Activated B cell treated with CpG ODN at 0.5 μM for 24 hours (primary cell): ENCODE measurements at regions of chr11 and their contacts with region 1.

Region 1: DNA sequence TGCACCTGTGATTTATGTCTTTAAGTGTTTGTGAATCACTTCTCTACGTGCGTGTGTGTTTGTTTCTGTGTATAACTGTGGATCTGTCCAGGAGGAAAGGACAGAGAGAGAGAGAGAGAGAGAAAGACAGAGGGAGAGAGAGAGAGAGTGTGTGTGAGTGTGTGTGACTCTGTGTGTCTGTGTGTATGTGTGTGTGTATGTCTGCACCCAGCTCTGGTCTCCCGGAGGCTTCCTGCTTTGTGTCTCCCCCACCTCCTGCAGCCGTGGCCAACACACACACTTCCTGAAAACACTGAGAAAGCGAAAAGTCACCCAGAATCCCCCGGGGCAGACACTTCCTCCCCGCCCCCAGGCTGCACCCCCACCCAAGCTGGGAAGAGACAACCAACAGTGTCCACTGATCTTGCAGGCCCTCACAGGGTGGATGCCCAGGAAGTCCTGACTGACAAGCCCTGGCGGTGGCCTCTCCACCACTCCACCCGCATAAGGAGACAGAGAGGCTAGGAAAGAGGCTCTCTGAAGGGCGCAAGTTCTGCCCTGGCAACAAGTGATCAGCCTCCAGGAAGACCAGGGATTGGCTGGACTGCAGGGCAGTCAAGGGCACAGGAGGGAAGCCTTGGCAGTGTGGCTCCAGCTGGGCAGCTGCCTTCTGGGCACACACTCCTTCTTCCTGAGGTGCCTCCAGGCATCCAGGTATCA is 30.0 kb downstream of the ARAP1 start:
- DNase-seq: peak; percentile 78
- ATAC-seq: peak; percentile 88
- H3K4me3 Mint-ChIP-seq: peak overlapping the region; percentile 97
- H3K27ac Mint-ChIP-seq: peak overlapping the region; percentile 94
- H3K4me1 Mint-ChIP-seq: peaks cover 85% of the 10 kb centered on the region
- H3K27me3 Mint-ChIP-seq: no peaks in the 10 kb centered on the region
- CTCF ChIP-seq: no peak

Region 2: GRCh38 chr11:72430741-72431570 is 291.2 kb before region 1 on chr11:
- CTCF ChIA-PET with region 1: no interaction called
- POLR2A ChIA-PET with region 1: no interaction called
- intact Hi-C with region 1: no loop called
- DNase-seq: no peak
- ATAC-seq: no peak
- H3K4me3 Mint-ChIP-seq: no peak overlapping the region
- H3K27ac Mint-ChIP-seq: no peak overlapping the region
- H3K4me1 Mint-ChIP-seq: peaks cover 36% of the 10 kb centered on the region
- H3K27me3 Mint-ChIP-seq: no peaks in the 10 kb centered on the region
- CTCF ChIP-seq: no peak

Region 3: GRCh38 chr11:72441752-72442207 is 280.4 kb before region 1 on chr11:
- CTCF ChIA-PET with region 1: no interaction called
- POLR2A ChIA-PET with region 1: no interaction called
- intact Hi-C with region 1: no loop called
- DNase-seq: no peak
- ATAC-seq: no peak
- H3K4me3 Mint-ChIP-seq: no peak overlapping the region
- H3K27ac Mint-ChIP-seq: no peak overlapping the region
- H3K4me1 Mint-ChIP-seq: peaks cover 7% of the 10 kb centered on the region
- H3K27me3 Mint-ChIP-seq: no peaks in the 10 kb centered on the region
- CTCF ChIP-seq: no peak

Region 4: DNA sequence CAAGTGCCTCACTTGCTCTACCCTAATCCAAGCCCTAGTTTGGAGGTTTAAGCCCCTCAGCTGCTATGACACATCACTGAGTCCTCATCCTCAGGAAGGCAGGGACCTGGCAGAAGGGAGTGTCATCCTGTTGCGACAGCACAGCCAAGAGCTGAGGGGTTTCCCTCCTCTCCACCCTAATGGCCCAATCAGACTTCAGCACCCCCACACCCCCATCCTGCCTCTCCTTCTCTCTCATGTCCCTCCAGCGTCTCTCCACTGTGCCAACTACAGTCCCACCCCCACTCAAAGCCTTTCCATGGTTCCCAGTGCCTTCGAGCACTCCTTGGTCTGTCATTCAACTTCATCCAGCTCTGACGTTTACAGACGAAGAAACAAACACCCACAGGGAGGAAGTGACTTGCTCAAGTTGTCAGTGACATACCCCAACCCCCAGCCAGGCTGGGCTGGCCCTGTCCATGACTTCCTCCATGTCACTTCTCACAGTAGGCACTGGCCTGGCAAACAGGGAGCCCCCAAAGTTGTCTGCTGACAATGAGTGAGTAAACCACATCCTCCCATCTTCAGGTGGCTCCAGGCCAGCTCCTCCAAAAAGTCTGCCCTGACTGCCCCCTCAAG is 14.4 kb after region 1 on chr11:
- CTCF ChIA-PET with region 1: interaction called, 42 read pairs
- POLR2A ChIA-PET with region 1: interaction called, 18 read pairs
- intact Hi-C with region 1: loop called (anchors 1 kb)
- DNase-seq: peak; percentile 47
- ATAC-seq: peak; percentile 41
- H3K4me3 Mint-ChIP-seq: peak overlapping the region; percentile 82
- H3K27ac Mint-ChIP-seq: peak overlapping the region; percentile 99
- H3K4me1 Mint-ChIP-seq: peaks cover 83% of the 10 kb centered on the region
- H3K27me3 Mint-ChIP-seq: no peaks in the 10 kb centered on the region
- CTCF ChIP-seq: no peak

Region 5: GRCh38 chr11:72787216-72788104 is 65.3 kb after region 1 on chr11:
- CTCF ChIA-PET with region 1: interaction called, 144 read pairs
- POLR2A ChIA-PET with region 1: interaction called, 57 read pairs
- intact Hi-C with region 1: no loop called
- DNase-seq: peak; percentile 33
- ATAC-seq: peak; percentile 79
- H3K4me3 Mint-ChIP-seq: peak overlapping the region; percentile 50
- H3K27ac Mint-ChIP-seq: peak overlapping the region; percentile 90
- H3K4me1 Mint-ChIP-seq: peaks cover 39% of the 10 kb centered on the region
- H3K27me3 Mint-ChIP-seq: no peaks in the 10 kb centered on the region
- CTCF ChIP-seq: no peak

Region 6: DNA sequence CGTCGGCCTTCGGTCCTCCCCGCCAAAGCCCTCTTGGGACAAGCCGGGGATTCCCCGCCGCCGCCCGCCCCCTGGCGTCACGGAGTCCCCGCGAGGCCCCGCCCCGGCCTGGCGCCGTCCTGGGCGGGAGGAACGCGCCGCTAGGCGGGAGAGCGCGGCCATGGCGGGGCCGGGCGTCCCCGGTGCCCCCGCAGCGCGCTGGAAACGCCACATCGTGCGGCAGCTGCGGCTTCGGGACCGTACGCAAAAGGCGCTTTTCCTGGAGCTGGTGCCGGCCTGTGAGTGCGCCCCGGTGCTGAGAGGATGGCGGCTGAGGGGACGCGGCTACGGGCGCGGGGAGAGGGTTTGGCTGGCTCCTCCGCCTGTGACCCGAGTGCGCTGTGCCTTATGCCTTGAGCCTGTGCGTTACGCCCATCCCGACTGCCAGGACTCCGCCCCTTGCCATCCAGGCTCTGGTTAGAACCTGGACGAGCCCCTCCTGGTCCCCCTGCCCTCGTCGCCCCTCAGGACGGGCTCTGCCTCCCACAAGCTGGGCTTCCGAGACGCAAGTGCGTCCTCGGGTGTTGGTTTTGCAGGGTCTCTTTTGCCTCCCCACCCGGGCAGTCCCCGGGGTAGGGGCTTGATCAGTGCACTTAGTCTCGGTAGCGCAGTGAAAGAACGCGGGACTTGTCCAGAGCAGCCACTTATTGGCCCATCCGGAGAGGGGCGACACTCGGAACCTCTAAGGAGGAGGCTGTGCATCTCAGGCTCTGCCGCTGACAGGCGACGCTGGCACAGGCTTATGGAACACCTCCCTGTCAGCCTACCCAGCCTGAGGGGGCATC is 92.3 kb after region 1 on chr11 and contains the start of gene ATG16L2:
- CTCF ChIA-PET with region 1: interaction called, 27 read pairs
- POLR2A ChIA-PET with region 1: interaction called, 26 read pairs
- intact Hi-C with region 1: loop called (anchors 1 kb)
- DNase-seq: peak; percentile 97
- ATAC-seq: peak; percentile 75
- H3K4me3 Mint-ChIP-seq: peak within 1 kb of the TSS; percentile 98
- H3K27ac Mint-ChIP-seq: peak within 1 kb of the TSS; percentile 94
- H3K4me1 Mint-ChIP-seq: peaks cover 54% of the 10 kb centered on the region
- H3K27me3 Mint-ChIP-seq: no peaks in the 10 kb centered on the region
- CTCF ChIP-seq: no peak
- total RNA-seq, gene ATG16L2: 73.5 and 96.7 TPM in 2 replicates

Region 7: GRCh38 chr11:72848846-72849466 is 126.8 kb after region 1 on chr11:
- CTCF ChIA-PET with region 1: interaction called, 7 read pairs
- POLR2A ChIA-PET with region 1: interaction called, 3 read pairs
- intact Hi-C with region 1: loop called (anchors 1 kb)
- DNase-seq: no peak
- ATAC-seq: peak; percentile 54
- H3K4me3 Mint-ChIP-seq: no peak overlapping the region
- H3K27ac Mint-ChIP-seq: no peak overlapping the region
- H3K4me1 Mint-ChIP-seq: peaks cover 16% of the 10 kb centered on the region
- H3K27me3 Mint-ChIP-seq: no peaks in the 10 kb centered on the region
- CTCF ChIP-seq: no peak

Region 8: GRCh38 chr11:73288873-73289707 is 566.9 kb after region 1 on chr11:
- CTCF ChIA-PET with region 1: no interaction called
- POLR2A ChIA-PET with region 1: no interaction called
- intact Hi-C with region 1: loop called (anchors 1 kb)
- DNase-seq: peak; percentile 66
- ATAC-seq: peak; percentile 90
- H3K4me3 Mint-ChIP-seq: peak overlapping the region; percentile 68
- H3K27ac Mint-ChIP-seq: peak overlapping the region; percentile 88
- H3K4me1 Mint-ChIP-seq: peaks cover 33% of the 10 kb centered on the region
- H3K27me3 Mint-ChIP-seq: no peaks in the 10 kb centered on the region
- CTCF ChIP-seq: peak; percentile 59